ENCODE measurements at regions of chr3 and their contacts with region 1.

Region 1: DNA sequence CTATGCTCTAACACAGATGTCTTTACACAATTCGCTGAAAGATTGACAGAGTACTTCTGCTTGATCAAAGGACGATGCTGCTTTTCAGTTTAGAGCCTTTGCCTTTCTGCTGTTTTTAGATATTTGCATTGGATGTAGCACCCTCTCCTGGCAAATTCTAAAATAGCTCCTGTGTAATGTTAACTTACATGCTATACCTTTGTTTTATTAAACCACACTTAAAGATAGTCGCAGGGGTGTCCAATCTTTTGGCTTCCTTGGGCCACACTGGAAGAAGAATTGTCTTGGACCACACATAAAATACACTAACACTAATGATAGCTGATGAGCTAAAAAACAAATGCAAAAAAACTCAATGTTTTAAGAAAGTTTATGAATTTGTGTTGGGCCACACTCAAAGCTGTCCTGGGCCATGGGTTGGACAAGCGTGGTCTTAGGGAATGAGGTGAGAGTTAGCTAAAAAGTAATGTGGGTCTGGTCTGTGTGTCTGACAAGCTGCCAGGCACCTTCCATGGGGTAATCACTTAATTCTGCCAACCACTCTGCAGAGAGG is 62.9 kb downstream of the ATG7 start:
- DNase-seq: peak; percentile 81
- H3K4me3 ChIP-seq: no peak overlapping the region
- H3K27ac ChIP-seq: no peak overlapping the region
- H3K4me1 ChIP-seq: no peaks in the 10 kb centered on the region
- H3K27me3 ChIP-seq: no peaks in the 10 kb centered on the region
- CTCF ChIP-seq: peak; percentile 73

Region 2: GRCh38 chr3:10783357-10784351 is 551.5 kb before region 1 on chr3:
- CTCF ChIA-PET with region 1: no interaction called
- POLR2A ChIA-PET with region 1: no interaction called
- intact Hi-C with region 1: no loop called
- DNase-seq: peak; percentile 52
- H3K4me3 ChIP-seq: no peak overlapping the region
- H3K27ac ChIP-seq: no peak overlapping the region
- H3K4me1 ChIP-seq: no peaks in the 10 kb centered on the region
- H3K27me3 ChIP-seq: peaks cover 26% of the 10 kb centered on the region
- CTCF ChIP-seq: peak; percentile 83

Region 3: DNA sequence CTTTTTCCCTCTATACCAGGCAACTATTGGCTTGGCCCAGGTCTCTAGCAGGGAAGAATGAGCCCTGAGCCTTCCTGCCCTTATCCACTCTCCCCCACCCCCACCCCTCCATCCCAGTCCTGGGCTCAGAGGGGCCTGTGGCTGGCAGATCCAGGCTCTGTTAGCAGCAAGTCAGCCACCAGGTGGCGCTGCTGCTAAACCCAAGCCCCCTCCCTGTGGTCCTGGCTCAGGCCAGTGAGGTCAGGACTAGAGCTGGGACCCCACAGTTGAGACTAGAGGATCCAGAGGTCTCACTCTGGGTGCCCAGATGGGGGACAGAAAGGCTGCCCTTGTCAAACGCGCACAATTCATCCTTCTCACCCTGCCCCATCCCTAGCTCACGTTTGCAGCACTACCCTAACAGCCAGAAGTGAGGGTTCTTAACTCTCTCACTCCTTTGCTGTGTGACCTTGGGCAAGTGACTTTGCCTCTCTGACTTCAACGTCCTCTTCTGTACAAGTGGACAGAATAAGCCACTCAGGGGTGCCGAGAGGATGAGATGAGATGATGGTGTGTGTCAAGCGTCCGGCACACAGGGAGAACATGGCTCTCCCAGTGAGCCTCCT is 389.3 kb before region 1 on chr3:
- CTCF ChIA-PET with region 1: no interaction called
- POLR2A ChIA-PET with region 1: no interaction called
- intact Hi-C with region 1: loop called (anchors 5 kb)
- DNase-seq: peak; percentile 60
- H3K4me3 ChIP-seq: no peak overlapping the region
- H3K27ac ChIP-seq: no peak overlapping the region
- H3K4me1 ChIP-seq: no peaks in the 10 kb centered on the region
- H3K27me3 ChIP-seq: no peaks in the 10 kb centered on the region
- CTCF ChIP-seq: peak; percentile 92

Region 4: GRCh38 chr3:11060500-11061251 is 274.5 kb before region 1 on chr3:
- CTCF ChIA-PET with region 1: interaction called, 15 read pairs
- POLR2A ChIA-PET with region 1: no interaction called
- intact Hi-C with region 1: loop called (anchors 2 kb)
- DNase-seq: peak; percentile 79
- H3K4me3 ChIP-seq: peak overlapping the region; percentile 15
- H3K27ac ChIP-seq: no peak overlapping the region
- H3K4me1 ChIP-seq: peaks cover 9% of the 10 kb centered on the region
- H3K27me3 ChIP-seq: no peaks in the 10 kb centered on the region
- CTCF ChIP-seq: peak; percentile 93

Region 5: DNA sequence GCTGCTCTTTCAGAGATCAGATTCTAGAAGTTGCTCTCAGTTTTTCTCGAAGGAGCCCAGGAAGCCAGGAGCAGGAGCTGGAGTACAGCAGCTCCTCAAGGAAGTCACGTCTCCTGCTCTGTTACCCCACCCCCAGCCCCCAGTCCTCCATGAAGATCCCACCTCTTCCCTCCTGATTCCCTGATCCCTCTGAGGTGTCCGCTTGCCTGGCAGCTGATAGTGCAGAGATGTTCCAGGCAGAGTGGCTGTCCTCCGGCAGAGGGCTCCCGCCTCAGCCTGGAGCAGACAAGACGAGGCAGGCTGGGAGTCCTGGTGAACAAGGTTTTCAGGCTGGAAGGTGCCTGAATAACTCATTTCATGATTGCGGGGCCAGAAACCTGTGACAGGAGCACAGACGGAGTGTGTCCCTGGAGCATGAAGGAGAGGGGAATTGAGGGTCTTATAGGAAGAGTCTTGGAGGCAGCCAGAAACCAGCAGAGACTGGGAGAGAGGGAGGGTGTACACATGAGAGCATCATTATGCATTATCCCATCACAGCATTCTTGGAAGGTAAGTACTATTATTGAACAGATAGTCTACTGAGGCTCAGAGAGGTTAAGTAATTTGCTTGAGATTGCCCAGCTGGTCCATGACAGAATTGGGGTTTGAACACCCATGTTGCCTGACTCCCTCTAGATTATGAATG is 179.6 kb before region 1 on chr3:
- CTCF ChIA-PET with region 1: interaction called, 18 read pairs
- POLR2A ChIA-PET with region 1: no interaction called
- intact Hi-C with region 1: loop called (anchors 1 kb)
- DNase-seq: peak; percentile 86
- H3K4me3 ChIP-seq: peak overlapping the region; percentile 37
- H3K27ac ChIP-seq: no peak overlapping the region
- H3K4me1 ChIP-seq: peaks cover 5% of the 10 kb centered on the region
- H3K27me3 ChIP-seq: peaks cover 22% of the 10 kb centered on the region
- CTCF ChIP-seq: peak; percentile 79

Region 6: GRCh38 chr3:11236595-11237461 is 98.3 kb before region 1 on chr3:
- CTCF ChIA-PET with region 1: interaction called, 5 read pairs
- POLR2A ChIA-PET with region 1: no interaction called
- intact Hi-C with region 1: loop called (anchors 1 kb)
- DNase-seq: peak; percentile 52
- H3K4me3 ChIP-seq: no peak overlapping the region
- H3K27ac ChIP-seq: no peak overlapping the region
- H3K4me1 ChIP-seq: no peaks in the 10 kb centered on the region
- H3K27me3 ChIP-seq: no peaks in the 10 kb centered on the region
- CTCF ChIP-seq: peak; percentile 81

Region 7: GRCh38 chr3:11260460-11260859 is 74.7 kb before region 1 on chr3:
- CTCF ChIA-PET with region 1: interaction called, 3 read pairs
- POLR2A ChIA-PET with region 1: no interaction called
- intact Hi-C with region 1: loop called (anchors 1 kb)
- DNase-seq: no peak
- H3K4me3 ChIP-seq: no peak overlapping the region
- H3K27ac ChIP-seq: no peak overlapping the region
- H3K4me1 ChIP-seq: no peaks in the 10 kb centered on the region
- H3K27me3 ChIP-seq: no peaks in the 10 kb centered on the region
- CTCF ChIP-seq: peak; percentile 48